Panc1 (cell line): ENCODE measurements at regions of chr11 and their contacts with region 1.

Region 1: DNA sequence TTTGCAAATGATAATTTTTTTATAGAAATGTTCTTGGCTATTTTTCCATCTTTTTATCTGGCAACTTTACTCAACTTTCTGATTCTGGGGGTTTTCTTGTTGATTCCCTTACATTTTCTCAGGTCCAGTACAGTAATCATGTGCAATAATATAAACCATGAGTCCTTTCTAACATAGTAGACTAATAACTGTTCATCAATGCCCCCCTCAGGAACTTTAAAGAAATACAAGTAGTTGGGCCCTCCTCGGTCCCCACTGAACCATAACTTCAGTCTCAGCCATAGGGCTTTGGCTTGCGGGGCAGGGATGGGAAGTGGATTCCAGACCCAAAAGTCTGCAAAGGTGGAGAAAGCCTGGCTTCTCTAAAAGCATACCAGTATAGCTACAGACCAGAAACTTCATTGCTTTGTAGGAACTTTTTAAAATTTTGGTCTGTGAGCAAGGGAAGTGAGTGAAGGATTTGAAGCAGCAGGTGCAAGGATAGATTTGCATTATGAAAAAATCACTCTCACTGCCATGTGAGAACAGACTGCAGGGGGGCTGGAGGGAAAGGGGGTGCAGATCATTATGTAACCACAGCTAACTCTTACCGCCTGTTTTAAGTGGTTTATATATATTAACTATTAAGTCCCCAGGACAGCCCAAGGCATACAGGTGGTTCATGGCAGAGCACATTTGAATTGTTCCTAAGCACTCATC is 10.4 kb upstream of the TUB start:
- DNase-seq: no peak
- ATAC-seq: peak; percentile 79
- H3K4me3 ChIP-seq: no peak overlapping the region
- H3K27ac ChIP-seq: no peak overlapping the region
- H3K4me1 ChIP-seq: no peaks in the 10 kb centered on the region
- H3K27me3 ChIP-seq: peaks cover 27% of the 10 kb centered on the region
- CTCF ChIP-seq: no peak

Region 2: DNA sequence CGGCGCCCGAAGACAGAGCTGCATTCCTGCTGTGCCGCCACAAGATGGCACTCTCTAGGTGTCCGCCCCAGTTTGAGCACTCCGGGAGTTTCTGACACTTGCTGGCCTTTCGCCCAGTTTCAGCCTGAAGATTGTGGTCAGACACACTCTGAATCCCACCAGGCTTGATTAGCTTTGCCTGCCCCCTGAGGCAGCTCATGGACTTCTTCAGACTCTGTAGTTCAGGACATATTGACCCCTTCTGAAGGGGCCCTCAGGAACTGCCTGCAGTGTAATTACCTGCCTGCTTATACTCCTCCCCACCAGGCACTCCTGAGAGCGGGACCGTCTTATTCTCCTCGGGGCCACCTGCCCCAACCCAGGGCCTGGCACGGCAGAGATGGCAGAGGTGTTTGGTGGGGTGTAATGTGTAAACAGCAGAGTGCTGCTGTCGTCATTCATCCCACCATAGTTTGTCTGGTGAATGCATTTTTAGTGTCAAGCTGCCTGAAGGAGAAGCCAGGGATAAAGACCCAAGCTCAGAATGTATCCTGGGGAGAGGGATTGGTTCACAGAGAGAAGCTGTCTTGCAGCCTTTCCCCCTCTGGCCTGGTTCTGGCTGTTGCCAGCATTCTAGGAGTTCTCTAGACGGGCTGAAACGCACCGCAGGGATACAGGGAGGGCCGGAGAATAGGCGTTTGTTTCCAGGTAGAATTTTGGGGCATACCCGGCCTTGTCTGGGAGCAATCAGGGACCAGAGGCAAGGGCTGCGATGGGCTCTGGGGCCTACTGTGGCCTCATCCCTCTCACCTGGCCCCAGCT is 37.1 kb before region 1 on chr11:
- CTCF ChIA-PET with region 1: interaction called, 8 read pairs
- POLR2A ChIA-PET with region 1: no interaction called
- in situ Hi-C with region 1: no loop called
- intact Hi-C with region 1: loop called (anchors 1 kb)
- DNase-seq: peak; percentile 45
- ATAC-seq: peak; percentile 90
- H3K4me3 ChIP-seq: no peak overlapping the region
- H3K27ac ChIP-seq: no peak overlapping the region
- H3K4me1 ChIP-seq: no peaks in the 10 kb centered on the region
- H3K27me3 ChIP-seq: peaks cover 2% of the 10 kb centered on the region
- CTCF ChIP-seq: peak; percentile 99